MCF 10A (cell line): ENCODE measurements at regions of chr9 and their contacts with region 1.

Region 1: GRCh38 chr9:124420991-124421543 is 5.8 kb upstream of the PSMB7 start:
- DNase-seq: no peak
- H3K4me3 Mint-ChIP-seq: no peak overlapping the region
- H3K27ac Mint-ChIP-seq: no peak overlapping the region
- H3K4me1 Mint-ChIP-seq: no peaks in the 10 kb centered on the region
- H3K27me3 Mint-ChIP-seq: peaks cover 15% of the 10 kb centered on the region
- CTCF ChIP-seq: no peak

Region 2: DNA sequence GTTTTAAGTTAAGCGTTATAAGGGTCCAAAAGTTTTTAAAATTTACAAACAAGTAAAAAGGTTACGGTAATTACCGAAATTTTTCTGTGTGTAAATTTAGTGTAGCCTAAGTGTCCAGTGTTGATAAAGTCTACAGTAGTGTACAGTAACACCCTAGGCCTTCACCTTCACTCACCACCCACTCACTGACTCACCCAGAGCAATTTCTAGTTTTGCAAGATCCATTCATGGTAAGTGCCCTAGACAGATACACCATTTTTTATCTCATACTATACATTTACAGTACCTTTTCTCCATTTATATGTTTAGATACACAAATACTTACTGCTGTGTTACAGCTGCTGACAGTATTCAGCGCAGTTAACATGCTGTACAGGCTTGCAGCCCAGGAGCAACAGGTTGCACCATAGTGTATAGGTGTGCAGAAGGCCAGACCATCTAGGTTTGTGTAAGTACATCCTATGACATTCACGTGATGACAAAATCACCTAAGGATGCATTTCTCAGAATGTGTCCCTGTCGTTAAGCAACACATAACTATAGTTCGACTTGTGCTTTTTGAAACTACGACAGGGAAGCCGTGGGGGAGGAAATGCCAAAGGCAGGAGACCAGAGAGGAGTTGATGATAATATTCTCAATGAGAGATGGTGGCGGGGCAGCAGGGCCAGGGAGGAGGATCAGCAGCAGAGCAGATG is 54.4 kb before region 1 on chr9:
- CTCF ChIA-PET with region 1: no interaction called
- POLR2A ChIA-PET with region 1: no interaction called
- intact Hi-C with region 1: no loop called
- DNase-seq: peak; percentile 75
- H3K4me3 Mint-ChIP-seq: no peak overlapping the region
- H3K27ac Mint-ChIP-seq: peak overlapping the region; percentile 32
- H3K4me1 Mint-ChIP-seq: peaks cover 35% of the 10 kb centered on the region
- H3K27me3 Mint-ChIP-seq: no peaks in the 10 kb centered on the region
- CTCF ChIP-seq: no peak

Region 3: DNA sequence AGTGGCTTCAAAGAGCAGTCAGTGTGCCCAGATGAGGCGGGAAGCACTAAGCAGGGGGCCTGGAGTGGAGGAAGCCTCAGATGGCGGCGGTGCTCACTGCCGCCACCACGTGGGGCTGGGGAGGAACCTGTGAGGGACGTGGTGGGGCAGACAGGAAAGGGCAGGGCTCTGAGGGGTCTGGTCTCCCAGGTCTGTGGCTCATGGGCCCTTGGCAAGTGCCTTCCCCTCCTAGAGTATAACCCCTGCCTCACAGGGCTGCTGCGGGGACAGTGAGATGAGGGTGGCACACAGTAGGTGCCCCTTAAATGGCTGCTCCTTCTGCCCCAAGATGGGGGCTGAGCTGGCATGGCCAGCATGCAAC is 59.5 kb after region 1 on chr9:
- CTCF ChIA-PET with region 1: interaction called, 9 read pairs
- POLR2A ChIA-PET with region 1: no interaction called
- intact Hi-C with region 1: loop called (anchors 1 kb)
- DNase-seq: peak; percentile 36
- H3K4me3 Mint-ChIP-seq: no peak overlapping the region
- H3K27ac Mint-ChIP-seq: no peak overlapping the region
- H3K4me1 Mint-ChIP-seq: peaks cover 4% of the 10 kb centered on the region
- H3K27me3 Mint-ChIP-seq: peaks cover 22% of the 10 kb centered on the region
- CTCF ChIP-seq: peak; percentile 28

Region 4: DNA sequence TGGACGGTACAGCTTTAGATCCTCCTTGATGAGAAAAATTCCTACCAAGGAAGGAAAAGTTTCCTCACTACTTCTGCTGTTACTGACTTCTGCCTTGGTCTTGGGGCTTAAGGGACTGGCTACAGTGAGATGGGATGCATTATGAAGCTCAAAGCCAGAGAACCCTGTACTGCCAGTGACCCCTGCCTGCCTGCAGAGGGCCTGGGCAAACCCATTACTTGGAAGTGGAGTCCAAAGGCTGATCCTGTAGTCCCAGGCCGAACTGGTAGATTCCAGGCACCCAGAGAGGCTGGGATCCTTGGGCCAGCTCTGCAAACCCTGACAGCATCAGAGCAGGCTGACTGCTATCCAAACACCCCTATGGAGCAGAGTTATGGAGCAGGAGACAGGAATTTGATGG is 111.8 kb after region 1 on chr9:
- CTCF ChIA-PET with region 1: interaction called, 247 read pairs
- POLR2A ChIA-PET with region 1: interaction called, 5 read pairs
- intact Hi-C with region 1: loop called (anchors 1 kb)
- DNase-seq: no peak
- H3K4me3 Mint-ChIP-seq: no peak overlapping the region
- H3K27ac Mint-ChIP-seq: no peak overlapping the region
- H3K4me1 Mint-ChIP-seq: no peaks in the 10 kb centered on the region
- H3K27me3 Mint-ChIP-seq: no peaks in the 10 kb centered on the region
- CTCF ChIP-seq: no peak